Right cardiac atrium (tissue), 5 donors: ENCODE measurements at regions of chr5 and their contacts with region 1.

Region 1: DNA sequence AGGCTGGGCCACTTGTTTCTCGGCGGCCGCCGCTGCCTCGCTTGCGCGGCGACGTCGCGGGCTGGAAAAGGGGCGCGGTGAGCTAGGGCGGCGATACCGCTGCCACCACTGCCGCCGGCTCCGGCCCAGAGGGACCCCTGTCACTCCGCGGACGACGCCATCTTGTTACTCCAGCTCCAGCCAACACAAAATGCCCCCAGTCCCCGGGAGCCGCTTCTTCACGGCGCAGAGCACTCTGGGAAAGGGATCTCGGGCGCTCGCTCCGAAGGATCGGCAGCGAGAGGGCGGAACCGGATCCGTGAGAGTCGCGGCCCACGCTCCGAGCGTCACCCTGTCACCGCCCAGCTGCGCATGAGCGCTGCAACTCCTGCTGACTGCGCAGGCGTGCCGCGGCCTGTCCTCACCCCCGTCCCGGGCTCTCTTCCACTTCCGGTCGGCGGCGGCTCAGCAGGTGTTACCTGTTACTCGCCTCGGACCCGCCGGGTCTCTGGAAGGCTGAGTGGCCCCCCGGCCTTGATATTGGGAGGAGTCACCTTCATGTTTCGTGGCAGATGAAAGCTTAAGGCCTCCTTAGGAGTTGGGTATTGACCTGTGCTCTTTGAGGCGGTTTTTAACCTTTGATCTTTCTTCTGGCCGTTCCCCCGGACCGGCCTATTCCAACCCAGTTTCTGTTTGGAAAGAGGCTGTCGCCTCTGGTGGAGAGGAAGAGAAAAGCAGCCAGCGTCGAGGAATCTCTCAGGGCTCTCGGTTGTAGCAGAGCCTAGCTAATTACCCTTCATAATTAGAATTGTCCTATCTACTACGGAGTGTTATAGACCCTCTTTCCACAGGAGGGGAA is at the start of gene CSNK1A1:
- DNase-seq: peak; percentile 98 to 100 (median 99)
- ATAC-seq: peak; percentile 98 to 99
- H3K4me3 ChIP-seq: peak within 1 kb of the TSS; percentile 97
- H3K27ac ChIP-seq: peak within 1 kb of the TSS; percentile 99
- H3K4me1 ChIP-seq: no peaks in the 10 kb centered on the region
- H3K27me3 ChIP-seq: no peaks in the 10 kb centered on the region
- total RNA-seq, gene CSNK1A1: 197 to 433 (median 236) TPM

Region 2: GRCh38 chr5:149357370-149358293 is 193.8 kb before region 1 on chr5 and contains the start of gene PCYOX1L:
- intact Hi-C with region 1: no loop called
- DNase-seq: peak; percentile 97 to 99 (median 98)
- ATAC-seq: peak; percentile 99
- H3K4me3 ChIP-seq: peak within 1 kb of the TSS; percentile 46
- H3K27ac ChIP-seq: peak within 1 kb of the TSS; percentile 44
- H3K4me1 ChIP-seq: no peaks in the 10 kb centered on the region
- H3K27me3 ChIP-seq: no peaks in the 10 kb centered on the region
- total RNA-seq, gene PCYOX1L: 4.7 to 7.0 (median 6.2) TPM

Region 3: GRCh38 chr5:149442563-149443182 is 108.7 kb before region 1 on chr5:
- intact Hi-C with region 1: loop called (anchors 5 kb)
- DNase-seq: peak; percentile 81 to 95 (median 95)
- ATAC-seq: peak; percentile 77 to 84
- H3K4me3 ChIP-seq: no peak overlapping the region
- H3K27ac ChIP-seq: peak overlapping the region; percentile 96
- H3K4me1 ChIP-seq: peaks cover 12% of the 10 kb centered on the region
- H3K27me3 ChIP-seq: no peaks in the 10 kb centered on the region

Region 4: DNA sequence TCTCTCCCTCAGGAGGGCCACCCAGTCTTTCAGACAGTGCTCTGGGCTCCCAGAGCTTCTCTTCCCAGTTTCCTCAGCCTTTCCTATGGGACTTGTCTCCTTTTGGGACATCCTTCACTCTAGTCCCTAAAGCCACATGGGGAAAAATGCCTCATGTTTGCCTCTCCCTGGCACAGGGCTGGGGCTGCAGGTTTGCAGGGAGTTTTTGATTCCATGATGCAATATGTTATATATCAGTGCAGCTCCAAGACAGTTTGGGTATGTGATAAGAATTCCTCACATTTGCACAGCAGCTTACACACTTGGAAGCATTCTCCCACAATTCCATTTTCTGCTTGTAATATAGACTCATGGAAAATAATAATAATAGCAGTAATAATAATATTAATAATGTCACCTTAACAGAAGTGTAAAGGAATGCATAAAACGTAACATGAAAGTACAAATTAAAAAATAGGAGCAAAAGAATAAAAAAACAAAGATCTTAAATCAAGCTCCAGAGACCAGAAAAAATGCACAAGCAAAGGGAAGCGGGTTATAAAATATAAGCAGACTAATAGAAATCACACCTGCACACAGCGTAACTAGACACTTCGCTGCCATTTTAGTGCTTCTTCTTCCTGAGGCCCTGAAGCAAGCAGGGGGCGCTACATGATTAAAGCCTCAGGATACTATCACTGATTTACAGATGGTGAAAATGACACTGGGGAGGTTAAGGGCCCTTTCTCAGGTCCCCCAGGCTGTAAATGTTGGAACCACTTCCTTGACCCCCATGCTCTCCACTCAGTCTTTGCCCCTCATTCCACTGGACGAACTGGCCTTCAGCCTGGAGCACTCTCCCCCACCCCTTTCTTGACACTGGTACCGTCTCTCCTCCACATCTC is 102.3 kb before region 1 on chr5:
- intact Hi-C with region 1: loop called (anchors 5 kb)
- DNase-seq: no peak
- ATAC-seq: no peak
- H3K4me3 ChIP-seq: no peak overlapping the region
- H3K27ac ChIP-seq: peak overlapping the region; percentile 80
- H3K4me1 ChIP-seq: peaks cover 47% of the 10 kb centered on the region
- H3K27me3 ChIP-seq: no peaks in the 10 kb centered on the region

Region 5: DNA sequence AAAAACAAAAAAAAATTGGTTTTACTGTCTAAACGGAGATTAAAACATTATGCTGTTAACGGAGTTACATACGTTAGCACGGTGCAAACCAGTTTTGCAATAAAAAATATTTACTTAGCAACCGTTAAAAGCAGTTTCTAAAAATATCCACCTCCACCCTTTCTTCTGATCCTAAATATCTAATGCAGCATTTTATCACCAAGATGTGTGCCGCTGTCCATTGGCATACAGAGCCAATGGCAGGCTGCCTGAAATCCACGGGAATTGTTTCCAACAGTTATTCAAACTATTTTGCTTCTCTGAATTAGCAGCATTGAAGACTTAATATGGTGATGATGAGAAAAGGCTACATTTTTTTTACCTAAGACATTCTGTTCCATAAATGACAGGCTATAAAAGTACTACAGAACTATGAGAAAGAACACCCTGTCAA is 61.8 kb before region 1 on chr5:
- intact Hi-C with region 1: loop called in 2 of 4 experiments (anchors 10 kb)
- DNase-seq: peak in 2 of 3 donors; percentile 68 to 85
- ATAC-seq: peak in 1 of 2 donors; percentile 5
- H3K4me3 ChIP-seq: no peak overlapping the region
- H3K27ac ChIP-seq: peak overlapping the region; percentile 55
- H3K4me1 ChIP-seq: peaks cover 9% of the 10 kb centered on the region
- H3K27me3 ChIP-seq: no peaks in the 10 kb centered on the region